PC-3 (cell line): ENCODE measurements at regions of chr10 and their contacts with region 1.

Region 1: DNA sequence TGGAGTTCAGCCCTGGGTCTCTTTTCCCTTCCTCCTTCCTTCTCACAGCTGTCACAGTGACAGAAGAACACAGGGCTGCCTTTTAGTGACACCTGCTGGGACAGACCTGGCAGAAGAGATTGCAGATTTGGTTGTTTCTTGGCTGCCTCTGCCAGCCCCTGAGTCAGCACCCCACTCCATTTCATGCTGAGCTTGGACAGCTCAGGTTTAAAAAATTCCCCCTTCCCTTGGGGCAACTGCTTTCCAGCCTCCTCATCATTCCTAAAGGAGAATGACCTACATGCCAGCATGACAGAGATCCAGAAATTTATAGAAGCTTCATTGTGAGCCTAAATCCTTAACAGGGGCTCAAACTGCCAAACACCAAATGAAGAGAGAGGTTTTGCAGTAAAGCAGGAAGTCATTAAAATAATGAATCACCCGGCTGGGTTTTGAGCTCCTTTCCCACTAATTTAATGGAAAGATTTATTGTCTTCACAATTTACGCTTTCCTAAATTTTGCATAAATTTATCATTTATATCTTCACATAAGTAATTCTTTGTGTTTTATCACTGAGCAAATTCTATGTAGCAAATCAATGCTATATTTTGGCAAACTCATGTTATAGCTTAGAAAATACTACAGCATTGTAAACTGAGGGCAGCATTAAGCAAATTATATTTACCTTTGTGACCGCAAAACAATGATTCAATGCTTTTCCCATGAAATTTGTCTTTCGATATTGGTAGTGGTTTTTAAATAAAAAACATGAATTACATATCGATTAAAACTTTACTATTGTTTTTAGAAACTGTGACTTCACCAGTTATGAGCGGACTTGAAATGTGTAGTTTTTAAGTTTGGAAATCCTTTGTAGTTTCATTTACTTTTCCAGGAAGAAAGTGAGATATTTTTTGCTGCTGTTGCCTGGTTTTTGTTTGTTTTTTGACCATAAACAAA is 399.5 kb upstream of the ANKRD30A start:
- DNase-seq: peak; percentile 100
- ATAC-seq: peak; percentile 91
- H3K4me3 ChIP-seq: peak overlapping the region; percentile 49
- H3K27ac ChIP-seq: peak overlapping the region; percentile 86
- H3K4me1 ChIP-seq: peaks cover 43% of the 10 kb centered on the region
- H3K27me3 ChIP-seq: no peaks in the 10 kb centered on the region
- CTCF ChIP-seq: peak; percentile 100

Region 2: DNA sequence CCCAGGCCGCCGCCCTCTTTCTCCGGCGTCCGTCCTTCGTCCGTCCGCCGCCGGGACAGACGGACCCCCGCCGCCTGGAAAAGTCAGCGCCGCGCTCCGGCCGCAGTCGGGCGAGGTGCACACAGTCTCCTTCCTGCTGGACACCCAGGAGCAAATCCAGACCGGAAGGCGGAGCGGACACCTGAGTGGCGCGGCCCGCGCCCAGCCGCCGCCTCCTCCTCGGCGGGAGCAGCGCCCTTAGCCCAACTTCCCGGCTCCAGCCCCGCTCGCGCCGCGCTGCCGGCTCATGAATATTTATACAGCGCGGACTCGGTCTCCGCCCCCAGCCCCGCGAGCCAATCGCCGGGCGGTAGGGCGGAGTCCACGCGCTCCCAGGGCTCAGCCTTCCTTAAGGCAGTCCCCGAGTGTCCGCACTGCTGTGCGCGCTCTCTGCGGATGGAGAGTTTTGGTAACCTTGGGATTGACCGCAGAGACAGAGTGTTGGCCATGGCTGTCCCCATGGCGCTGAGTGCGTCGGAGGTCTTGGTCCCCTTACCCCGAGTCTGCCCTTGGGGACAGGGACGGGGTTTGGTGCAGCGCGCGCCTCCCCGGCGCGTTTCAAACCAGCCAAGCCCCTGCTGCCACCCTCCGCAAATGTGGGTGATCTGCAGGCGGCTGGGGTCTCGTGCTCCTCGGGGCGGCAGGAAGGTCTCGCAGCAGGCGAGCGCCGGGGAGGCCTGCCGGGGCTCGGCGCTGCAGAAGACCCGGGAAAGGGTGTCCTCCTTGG is 1083.6 kb before region 1 on chr10 and contains the start of gene FZD8:
- CTCF ChIA-PET with region 1: interaction called, 36 read pairs
- POLR2A ChIA-PET with region 1: interaction called, 36 read pairs
- intact Hi-C with region 1: loop called (anchors 1 kb)
- DNase-seq: peak; percentile 100
- ATAC-seq: peak; percentile 73
- H3K4me3 ChIP-seq: peak within 1 kb of the TSS; percentile 80
- H3K27ac ChIP-seq: peak within 1 kb of the TSS; percentile 62
- H3K4me1 ChIP-seq: peaks cover 30% of the 10 kb centered on the region
- H3K27me3 ChIP-seq: no peaks in the 10 kb centered on the region
- CTCF ChIP-seq: peak; percentile 60; the same call in 1 of the 2 replicates
- total RNA-seq, gene FZD8: 275 and 375 TPM in 2 replicates

Region 3: DNA sequence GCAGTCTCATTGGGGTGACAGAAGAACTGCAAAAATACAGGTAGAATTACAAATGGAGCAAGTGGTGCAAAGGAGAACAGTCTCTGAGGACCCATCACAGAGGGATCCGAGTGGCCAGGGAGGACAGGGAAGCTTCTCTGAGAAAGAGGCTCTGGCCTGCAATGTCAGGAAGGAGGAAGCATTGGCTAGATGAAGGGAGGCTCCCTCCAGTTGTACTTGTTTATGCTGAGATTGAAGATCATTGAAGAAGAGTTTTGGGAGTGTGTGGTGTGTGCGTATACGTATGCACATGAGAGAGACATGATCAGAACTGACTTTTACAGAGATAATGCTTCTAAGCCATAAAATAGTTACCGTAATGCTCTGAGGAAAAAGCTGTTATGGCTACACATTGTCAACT is 809.1 kb before region 1 on chr10:
- CTCF ChIA-PET with region 1: no interaction called
- POLR2A ChIA-PET with region 1: no interaction called
- intact Hi-C with region 1: loop called (anchors 1 kb)
- DNase-seq: peak; percentile 64
- ATAC-seq: peak; percentile 21
- H3K4me3 ChIP-seq: no peak overlapping the region
- H3K27ac ChIP-seq: no peak overlapping the region
- H3K4me1 ChIP-seq: peaks cover 22% of the 10 kb centered on the region
- H3K27me3 ChIP-seq: no peaks in the 10 kb centered on the region
- CTCF ChIP-seq: peak; percentile 68

Region 4: DNA sequence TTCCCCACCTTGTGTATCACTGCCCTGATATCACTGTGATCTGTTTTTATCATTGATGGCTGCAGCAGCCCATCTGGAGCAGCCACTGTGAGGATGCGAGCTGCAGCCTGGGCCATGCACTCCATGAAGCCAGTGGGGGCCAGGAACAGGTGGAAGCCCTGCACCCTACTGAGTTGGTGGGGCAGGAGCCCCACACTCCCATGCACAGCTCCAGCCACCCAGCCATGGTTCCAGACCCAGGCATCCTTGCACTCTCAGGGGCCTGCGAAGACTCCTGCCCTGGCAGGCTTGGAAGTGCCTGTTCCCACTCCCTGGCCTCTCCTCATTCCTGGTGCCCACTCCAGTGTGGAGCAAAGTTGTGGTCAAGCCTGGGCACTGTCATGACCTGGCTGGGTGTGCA is 659.7 kb before region 1 on chr10:
- CTCF ChIA-PET with region 1: no interaction called
- POLR2A ChIA-PET with region 1: no interaction called
- intact Hi-C with region 1: no loop called
- DNase-seq: no peak
- ATAC-seq: no peak
- H3K4me3 ChIP-seq: no peak overlapping the region
- H3K27ac ChIP-seq: no peak overlapping the region
- H3K4me1 ChIP-seq: no peaks in the 10 kb centered on the region
- H3K27me3 ChIP-seq: no peaks in the 10 kb centered on the region
- CTCF ChIP-seq: no peak

Region 5: DNA sequence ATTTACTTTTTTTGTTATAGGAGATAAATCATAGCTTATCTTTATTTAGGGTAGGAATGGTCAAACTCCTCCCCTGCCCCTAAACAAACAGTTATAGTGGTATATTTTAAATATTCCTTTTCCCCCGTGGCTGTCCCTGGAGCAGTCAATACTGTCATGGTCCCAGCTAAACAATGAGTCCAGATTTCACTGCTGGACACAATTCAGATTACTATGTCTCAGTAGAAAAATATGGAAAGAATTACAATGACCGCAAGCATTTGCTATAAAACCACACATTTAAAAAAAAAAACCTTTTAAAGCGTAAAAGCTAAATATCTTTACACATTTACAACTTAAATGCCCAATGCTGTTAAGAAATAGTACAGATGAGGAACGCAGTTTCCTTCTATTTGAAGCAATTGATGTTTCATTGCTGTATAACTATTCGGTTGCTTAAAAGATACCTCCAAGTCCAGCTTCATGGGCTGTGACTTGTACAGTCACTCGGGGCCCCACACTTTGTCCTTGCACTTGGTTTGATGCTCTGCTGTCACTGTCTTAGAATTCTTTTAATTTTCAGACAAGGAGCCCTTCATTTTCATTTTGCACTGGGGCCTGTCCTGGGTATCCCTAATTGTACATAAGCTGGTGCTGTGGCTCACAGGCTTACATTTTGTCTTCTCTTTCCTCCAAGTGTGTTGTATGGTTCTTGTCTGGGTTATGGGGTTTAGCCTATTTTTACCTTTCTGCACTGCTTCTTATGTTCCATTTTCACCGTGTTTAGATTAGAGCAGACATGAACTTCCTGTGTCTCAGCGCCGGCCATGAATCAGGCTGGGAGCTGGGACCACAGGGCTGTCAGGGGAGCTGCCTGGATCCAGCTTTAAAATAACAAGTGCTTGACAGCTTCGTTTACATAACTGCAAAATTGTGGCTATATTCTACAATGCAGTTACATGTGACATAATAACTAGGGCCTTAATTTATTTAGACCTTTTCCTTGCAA is 553.6 kb before region 1 on chr10:
- CTCF ChIA-PET with region 1: interaction called, 23 read pairs
- POLR2A ChIA-PET with region 1: no interaction called
- intact Hi-C with region 1: loop called (anchors 1 kb)
- DNase-seq: peak; percentile 99
- ATAC-seq: peak; percentile 71
- H3K4me3 ChIP-seq: peak overlapping the region; percentile 28
- H3K27ac ChIP-seq: peak overlapping the region; percentile 79
- H3K4me1 ChIP-seq: peaks cover 43% of the 10 kb centered on the region
- H3K27me3 ChIP-seq: no peaks in the 10 kb centered on the region
- CTCF ChIP-seq: no peak

Region 6: GRCh38 chr10:36578306-36578705 is 147.5 kb before region 1 on chr10:
- CTCF ChIA-PET with region 1: no interaction called
- POLR2A ChIA-PET with region 1: no interaction called
- intact Hi-C with region 1: loop called (anchors 1 kb)
- DNase-seq: peak; percentile 100
- ATAC-seq: peak; percentile 96
- H3K4me3 ChIP-seq: no peak overlapping the region
- H3K27ac ChIP-seq: peak overlapping the region; percentile 84
- H3K4me1 ChIP-seq: peaks cover 19% of the 10 kb centered on the region
- H3K27me3 ChIP-seq: no peaks in the 10 kb centered on the region
- CTCF ChIP-seq: no peak

Region 7: DNA sequence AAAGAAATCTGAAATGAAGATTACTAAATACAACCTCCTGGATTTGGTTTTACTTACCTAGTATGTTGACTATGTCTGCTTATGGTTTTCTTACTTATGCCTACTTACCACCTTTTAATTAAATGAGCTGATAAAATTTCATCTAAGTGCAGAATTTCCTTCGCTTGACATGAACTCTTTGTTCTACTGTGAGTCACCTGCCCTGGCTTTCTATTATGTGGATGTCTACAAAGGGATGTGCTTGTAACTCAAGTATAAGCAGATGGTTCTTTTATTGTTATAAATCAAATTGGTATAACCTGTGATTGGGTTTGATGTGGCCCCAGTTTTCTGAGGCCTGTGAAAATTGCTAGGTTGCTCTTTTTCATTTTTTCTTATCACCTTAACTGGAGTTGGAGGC is 10.5 kb after region 1 on chr10:
- CTCF ChIA-PET with region 1: interaction called, 5 read pairs
- POLR2A ChIA-PET with region 1: no interaction called
- intact Hi-C with region 1: loop called (anchors 1 kb)
- DNase-seq: peak; percentile 75
- ATAC-seq: peak; percentile 15; the same call in 1 of the 2 replicates
- H3K4me3 ChIP-seq: no peak overlapping the region
- H3K27ac ChIP-seq: no peak overlapping the region
- H3K4me1 ChIP-seq: peaks cover 46% of the 10 kb centered on the region
- H3K27me3 ChIP-seq: no peaks in the 10 kb centered on the region
- CTCF ChIP-seq: no peak